OCI-LY7 (cell line): ENCODE measurements at regions of chr7 and their contacts with region 1.

Region 1: DNA sequence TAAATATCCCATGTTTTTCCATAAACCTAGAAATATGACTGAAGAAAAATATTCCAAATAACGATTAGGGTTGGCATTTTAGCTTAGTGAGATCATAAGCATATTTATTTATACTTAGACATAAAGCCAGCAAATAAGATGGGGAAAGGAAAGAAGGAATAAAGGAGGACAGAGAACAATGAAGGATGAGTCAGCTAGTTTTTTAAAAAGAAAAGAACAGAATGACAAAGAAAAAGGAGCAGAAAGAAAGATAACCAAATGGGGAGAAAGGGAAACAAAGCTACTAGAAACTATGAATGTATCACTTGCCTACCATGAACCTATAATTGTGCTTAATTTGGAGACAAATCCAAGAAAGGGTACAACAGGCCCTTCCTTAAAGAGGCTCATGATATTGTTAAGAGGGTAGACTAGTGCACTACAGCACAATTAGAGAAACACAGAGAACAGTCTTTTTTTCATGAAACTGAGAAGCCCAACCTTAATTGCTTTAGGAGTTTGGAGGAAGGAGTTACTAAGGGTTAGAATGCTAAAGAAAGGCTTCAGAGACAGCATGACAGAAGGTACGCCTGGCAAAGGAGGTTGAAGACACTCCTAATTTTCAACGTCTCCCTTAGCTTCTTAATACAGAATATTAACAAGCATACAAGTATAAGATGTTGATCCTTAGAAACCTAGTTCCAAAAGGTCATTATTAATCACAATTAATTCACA is 23.9 kb downstream of the HERPUD2 start:
- DNase-seq: no peak
- H3K4me3 ChIP-seq: no peak overlapping the region
- H3K27ac ChIP-seq: no peak overlapping the region
- H3K4me1 ChIP-seq: no peaks in the 10 kb centered on the region
- CTCF ChIP-seq: no peak

Region 2: DNA sequence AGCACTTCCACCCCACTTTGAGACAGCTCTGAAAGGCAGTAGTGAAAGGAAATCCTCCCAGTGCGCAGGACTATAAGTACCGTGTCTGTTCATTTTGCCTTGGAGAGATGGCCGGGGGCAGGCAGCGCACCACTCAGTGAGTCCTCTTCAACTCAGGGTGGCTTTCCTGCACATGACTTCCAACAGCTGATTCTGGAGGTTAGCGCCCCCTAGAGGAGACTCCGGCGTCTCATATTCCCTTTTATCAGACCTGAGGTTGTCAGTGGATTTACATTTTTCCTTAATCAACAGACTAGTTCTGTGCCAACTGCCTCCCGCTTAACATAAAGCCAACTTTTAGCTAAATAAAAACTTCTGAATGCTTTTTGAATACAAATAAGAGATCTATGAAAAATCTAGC is 77.1 kb before region 1 on chr7:
- CTCF ChIA-PET with region 1: no interaction called
- POLR2A ChIA-PET with region 1: no interaction called
- intact Hi-C with region 1: no loop called
- DNase-seq: peak; percentile 28
- H3K4me3 ChIP-seq: no peak overlapping the region
- H3K27ac ChIP-seq: no peak overlapping the region
- H3K4me1 ChIP-seq: no peaks in the 10 kb centered on the region
- CTCF ChIP-seq: peak; percentile 87

Region 3: DNA sequence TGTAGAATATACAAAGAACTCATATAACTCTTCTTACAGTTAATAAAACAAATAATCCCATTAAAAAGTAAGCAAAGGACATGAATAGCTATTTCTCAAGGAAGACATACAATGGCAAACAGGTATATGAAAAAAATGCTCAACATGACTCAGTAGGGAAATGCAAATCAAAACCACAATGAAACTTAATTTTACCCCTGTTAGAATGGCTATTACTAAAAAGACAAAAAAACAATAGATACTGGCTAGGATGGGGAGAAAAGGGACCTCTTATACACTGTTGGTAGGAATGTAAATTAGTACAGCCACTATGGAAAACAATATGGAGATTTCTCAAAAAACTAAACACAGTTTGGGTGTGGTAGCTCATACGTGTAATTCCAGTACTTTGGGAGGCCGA is 13.9 kb before region 1 on chr7:
- CTCF ChIA-PET with region 1: no interaction called
- POLR2A ChIA-PET with region 1: interaction called, 16 read pairs
- intact Hi-C with region 1: no loop called
- DNase-seq: no peak
- H3K4me3 ChIP-seq: no peak overlapping the region
- H3K27ac ChIP-seq: no peak overlapping the region
- H3K4me1 ChIP-seq: peaks cover 5% of the 10 kb centered on the region
- CTCF ChIP-seq: no peak